ENCODE measurements at regions of chr14 and their contacts with region 1.

Region 1: GRCh38 chr14:62126879-62127478 is 364.8 kb downstream of the SNAPC1 start:
- DNase-seq: peak; percentile 49
- H3K4me3 ChIP-seq: no peak overlapping the region
- CTCF ChIP-seq: peak; percentile 59

Region 2: DNA sequence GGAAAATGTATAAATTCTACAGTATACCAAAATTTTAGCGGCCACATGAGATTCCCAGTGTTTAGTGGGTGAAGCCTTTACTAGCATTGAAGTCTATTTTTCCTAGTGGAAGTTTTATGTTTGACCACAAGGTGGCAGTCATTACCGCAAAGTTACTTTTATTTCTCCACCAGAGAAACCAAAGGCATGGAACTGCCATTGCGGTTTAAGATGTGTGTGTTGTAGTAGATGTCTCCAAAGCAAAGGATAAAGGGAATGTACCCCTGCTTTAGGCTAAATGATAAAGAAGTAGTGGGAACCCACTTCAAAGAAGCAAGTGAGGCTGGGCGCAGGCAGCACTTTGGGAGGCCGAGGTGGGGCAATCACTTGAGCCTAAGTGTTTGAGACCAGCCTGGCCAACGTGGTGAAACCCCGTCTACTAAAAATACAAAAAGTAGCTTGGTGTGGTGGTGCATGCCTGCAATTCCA is 665.1 kb before region 1 on chr14:
- CTCF ChIA-PET with region 1: interaction called, 12 read pairs
- POLR2A ChIA-PET with region 1: no interaction called
- DNase-seq: no peak
- H3K4me3 ChIP-seq: no peak overlapping the region
- CTCF ChIP-seq: peak; percentile 30

Region 3: GRCh38 chr14:61860294-61860918 is 266.6 kb before region 1 on chr14:
- CTCF ChIA-PET with region 1: interaction called, 23 read pairs
- POLR2A ChIA-PET with region 1: no interaction called
- DNase-seq: no peak
- H3K4me3 ChIP-seq: no peak overlapping the region
- CTCF ChIP-seq: peak; percentile 69

Region 4: DNA sequence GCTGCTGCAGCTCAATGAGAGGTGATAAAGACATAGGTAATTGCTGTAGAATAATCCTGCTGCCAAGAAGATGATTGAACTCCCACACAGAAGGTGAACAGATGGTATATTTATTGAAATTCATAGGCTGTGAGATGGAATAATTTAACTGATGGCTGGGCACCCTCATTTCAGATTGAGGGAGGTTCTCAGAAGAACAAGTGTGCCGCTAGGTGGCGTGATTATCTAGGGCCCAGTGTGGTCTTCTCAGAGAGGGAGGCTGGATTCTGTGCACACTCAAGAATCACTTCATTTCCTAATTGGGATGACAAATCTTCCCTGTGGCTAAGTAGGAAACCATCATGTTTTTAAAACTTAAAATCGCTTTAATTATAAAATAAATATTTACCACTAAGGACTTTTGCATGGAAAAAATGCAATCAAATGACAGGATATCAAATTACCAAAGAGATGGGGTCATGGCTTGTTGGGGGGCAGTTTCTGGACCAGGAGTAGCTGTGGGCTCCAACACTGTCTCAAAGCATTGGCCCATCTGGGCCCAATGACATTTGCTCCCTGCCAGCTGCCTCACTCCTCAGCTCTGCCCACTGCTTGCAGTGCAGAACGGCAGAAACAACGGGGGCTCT is 232.4 kb before region 1 on chr14:
- CTCF ChIA-PET with region 1: interaction called, 180 read pairs
- POLR2A ChIA-PET with region 1: no interaction called
- DNase-seq: peak; percentile 34
- H3K4me3 ChIP-seq: no peak overlapping the region
- CTCF ChIP-seq: peak; percentile 81

Region 5: DNA sequence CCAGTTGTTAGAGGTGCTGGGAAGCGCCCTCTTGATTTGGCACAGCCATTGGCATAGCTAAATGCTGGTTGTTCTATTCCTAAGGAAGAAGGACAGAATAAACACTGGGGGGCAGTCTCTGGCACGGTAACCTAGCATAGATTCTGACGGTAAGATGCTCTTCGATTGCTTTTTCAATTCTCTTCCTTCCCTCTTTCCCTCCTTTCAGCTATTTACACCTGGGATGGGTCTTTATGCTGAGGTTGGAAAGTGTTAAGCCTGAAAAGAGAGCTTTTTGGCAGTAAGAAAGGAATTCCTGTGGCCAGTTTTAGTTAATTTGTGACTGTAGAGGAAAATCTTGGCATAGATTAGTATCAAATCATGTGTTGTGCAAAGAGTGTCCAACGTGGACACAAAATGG is 201.9 kb before region 1 on chr14:
- CTCF ChIA-PET with region 1: interaction called, 131 read pairs
- POLR2A ChIA-PET with region 1: interaction called, 3 read pairs
- DNase-seq: no peak
- H3K4me3 ChIP-seq: no peak overlapping the region
- CTCF ChIP-seq: peak; percentile 28

Region 6: DNA sequence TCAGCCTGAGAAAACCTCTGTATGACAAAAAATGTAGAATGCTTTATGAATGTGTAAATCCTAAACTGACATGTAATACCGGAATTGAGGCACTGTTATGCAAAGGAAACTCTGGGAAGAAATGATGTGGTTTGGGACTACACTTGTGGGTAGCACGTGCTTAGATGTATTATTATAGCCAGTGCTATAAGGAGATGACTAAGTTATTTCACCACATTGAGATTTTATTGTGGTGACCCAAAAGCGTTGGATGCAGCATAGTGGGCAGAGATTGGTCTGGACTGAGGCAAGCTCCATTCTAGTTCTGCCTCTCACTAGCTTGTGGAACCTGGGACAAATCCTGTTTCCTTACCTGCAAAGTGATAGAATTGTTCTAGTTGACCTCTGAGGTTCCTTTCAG is 192.6 kb before region 1 on chr14:
- CTCF ChIA-PET with region 1: interaction called, 131 read pairs
- POLR2A ChIA-PET with region 1: no interaction called
- DNase-seq: peak; percentile 94
- H3K4me3 ChIP-seq: no peak overlapping the region
- CTCF ChIP-seq: no peak

Region 7: DNA sequence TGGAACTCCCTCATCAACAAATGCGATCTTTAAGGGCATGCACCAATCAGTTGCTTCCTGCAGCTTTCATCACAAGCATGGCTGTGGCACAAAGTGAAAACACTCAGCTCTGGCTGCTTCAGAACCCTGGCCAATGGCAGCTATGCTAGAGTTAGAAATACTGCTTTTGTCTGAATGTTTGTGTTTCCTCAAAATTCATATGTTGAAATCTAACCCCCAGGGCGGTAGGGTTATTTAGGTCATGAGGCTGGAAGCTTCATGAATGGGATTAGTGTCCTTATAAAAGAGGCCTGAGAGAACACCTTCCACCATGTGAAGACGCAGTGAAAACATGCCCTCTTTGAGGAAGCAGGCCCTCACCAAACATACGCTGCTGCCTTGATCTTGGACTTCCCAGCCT is 89.1 kb after region 1 on chr14:
- CTCF ChIA-PET with region 1: no interaction called
- POLR2A ChIA-PET with region 1: no interaction called
- DNase-seq: no peak
- H3K4me3 ChIP-seq: no peak overlapping the region
- CTCF ChIP-seq: no peak

Measured in AG04449 (cell line).